IMR-90 (cell line): ENCODE measurements at regions of chr18 and their contacts with region 1.

Region 1: DNA sequence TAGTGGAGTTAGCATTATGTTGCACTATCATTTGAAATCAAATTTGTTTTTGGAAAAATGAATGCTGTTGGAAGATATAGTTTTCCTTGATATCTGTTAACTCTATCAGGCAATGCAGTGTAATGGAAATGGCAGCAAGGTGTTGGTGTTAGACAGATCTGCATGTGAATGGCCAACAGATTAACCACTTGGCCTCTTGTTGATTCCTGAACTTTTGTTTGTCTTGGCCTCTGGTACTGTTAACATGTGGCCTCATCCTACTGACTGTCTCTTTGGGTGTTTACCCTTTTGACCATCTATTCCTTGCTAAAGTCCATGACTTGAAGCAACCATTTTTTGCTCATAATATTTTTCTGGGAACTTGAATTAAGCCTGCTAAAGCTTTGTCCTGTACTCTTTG is 110.2 kb upstream of the CDH2 start:
- DNase-seq: no peak
- ATAC-seq: no peak
- H3K4me3 ChIP-seq: no peak overlapping the region
- H3K27ac ChIP-seq: no peak overlapping the region
- H3K4me1 ChIP-seq: peaks cover 2% of the 10 kb centered on the region; the same call in 1 of the 2 replicates
- H3K27me3 ChIP-seq: no peaks in the 10 kb centered on the region
- CTCF ChIP-seq: no peak
- POLR2A ChIP-seq: no peak
- RAD21 ChIP-seq: no peak

Region 2: GRCh38 chr18:28357766-28358401 is 70.7 kb after region 1 on chr18:
- CTCF ChIA-PET with region 1: no interaction called
- POLR2A ChIA-PET with region 1: no interaction called
- dilution Hi-C with region 1: no loop called
- in situ Hi-C with region 1: no loop called
- intact Hi-C with region 1: loop called (anchors 10 kb)
- DNase-seq: no peak
- ATAC-seq: no peak
- H3K4me3 ChIP-seq: no peak overlapping the region
- H3K27ac ChIP-seq: no peak overlapping the region
- H3K4me1 ChIP-seq: no peaks in the 10 kb centered on the region
- H3K27me3 ChIP-seq: no peaks in the 10 kb centered on the region
- CTCF ChIP-seq: no peak
- POLR2A ChIP-seq: no peak
- RAD21 ChIP-seq: no peak